Naive thymus-derived CD4-positive, alpha-beta T cell (primary cell): ENCODE measurements at regions of chr10 and their contacts with region 1.

Region 1: GRCh38 chr10:110304780-110305421 is at the start of gene SMNDC1:
- DNase-seq: peak; percentile 93 to 97 (median 96)
- ATAC-seq: peak; percentile 94
- H3K4me3 ChIP-seq: peak within 1 kb of the TSS; percentile 91
- H3K4me3 Mint-ChIP-seq: peak within 1 kb of the TSS; percentile 94 to 99 (median 98)
- H3K27ac ChIP-seq: peak within 1 kb of the TSS; percentile 89
- H3K27ac Mint-ChIP-seq: peak within 1 kb of the TSS; percentile 97 to 100 (median 100)
- H3K4me1 ChIP-seq: peaks cover 32 to 38% of the 10 kb centered on the region in 2 donors
- H3K4me1 Mint-ChIP-seq: peaks cover 26 to 61% (median 55%) of the 10 kb centered on the region in 7 donors
- H3K27me3 ChIP-seq: no peaks in the 10 kb centered on the region
- H3K27me3 Mint-ChIP-seq: no peaks in the 10 kb centered on the region
- total RNA-seq, gene SMNDC1: 34.4 to 43.1 (median 40.1) TPM

Region 2: GRCh38 chr10:110032801-110033700 is 271.9 kb before region 1 on chr10:
- CTCF ChIA-PET with region 1: no interaction called
- POLR2A ChIA-PET with region 1: no interaction called
- intact Hi-C with region 1: no loop called
- DNase-seq: no peak
- ATAC-seq: no peak
- H3K4me3 ChIP-seq: no peak overlapping the region
- H3K4me3 Mint-ChIP-seq: peak overlapping the region in 4 of 10 donors; percentile 21 to 60 (median 46)
- H3K27ac ChIP-seq: no peak overlapping the region
- H3K27ac Mint-ChIP-seq: peak overlapping the region in 6 of 9 donors; percentile 48 to 85 (median 61)
- H3K4me1 ChIP-seq: peaks cover 20 to 44% of the 10 kb centered on the region in 2 donors
- H3K4me1 Mint-ChIP-seq: peaks cover 43 to 87% (median 81%) of the 10 kb centered on the region in 7 donors
- H3K27me3 ChIP-seq: no peaks in the 10 kb centered on the region
- H3K27me3 Mint-ChIP-seq: no peaks in the 10 kb centered on the region

Region 3: GRCh38 chr10:110225756-110226542 is 79.0 kb before region 1 on chr10:
- CTCF ChIA-PET with region 1: no interaction called
- POLR2A ChIA-PET with region 1: interaction called, 7 read pairs
- intact Hi-C with region 1: loop called (anchors 1 kb)
- DNase-seq: peak; percentile 83 to 91 (median 88)
- ATAC-seq: peak; percentile 73
- H3K4me3 ChIP-seq: peak overlapping the region; percentile 75
- H3K4me3 Mint-ChIP-seq: peak overlapping the region; percentile 87 to 99 (median 94)
- H3K27ac ChIP-seq: peak overlapping the region; percentile 92
- H3K27ac Mint-ChIP-seq: peak overlapping the region; percentile 78 to 97 (median 96)
- H3K4me1 ChIP-seq: peaks cover 16 to 27% of the 10 kb centered on the region in 2 donors
- H3K4me1 Mint-ChIP-seq: peaks cover 27 to 68% (median 49%) of the 10 kb centered on the region in 7 donors
- H3K27me3 ChIP-seq: no peaks in the 10 kb centered on the region
- H3K27me3 Mint-ChIP-seq: no peaks in the 10 kb centered on the region

Region 4: DNA sequence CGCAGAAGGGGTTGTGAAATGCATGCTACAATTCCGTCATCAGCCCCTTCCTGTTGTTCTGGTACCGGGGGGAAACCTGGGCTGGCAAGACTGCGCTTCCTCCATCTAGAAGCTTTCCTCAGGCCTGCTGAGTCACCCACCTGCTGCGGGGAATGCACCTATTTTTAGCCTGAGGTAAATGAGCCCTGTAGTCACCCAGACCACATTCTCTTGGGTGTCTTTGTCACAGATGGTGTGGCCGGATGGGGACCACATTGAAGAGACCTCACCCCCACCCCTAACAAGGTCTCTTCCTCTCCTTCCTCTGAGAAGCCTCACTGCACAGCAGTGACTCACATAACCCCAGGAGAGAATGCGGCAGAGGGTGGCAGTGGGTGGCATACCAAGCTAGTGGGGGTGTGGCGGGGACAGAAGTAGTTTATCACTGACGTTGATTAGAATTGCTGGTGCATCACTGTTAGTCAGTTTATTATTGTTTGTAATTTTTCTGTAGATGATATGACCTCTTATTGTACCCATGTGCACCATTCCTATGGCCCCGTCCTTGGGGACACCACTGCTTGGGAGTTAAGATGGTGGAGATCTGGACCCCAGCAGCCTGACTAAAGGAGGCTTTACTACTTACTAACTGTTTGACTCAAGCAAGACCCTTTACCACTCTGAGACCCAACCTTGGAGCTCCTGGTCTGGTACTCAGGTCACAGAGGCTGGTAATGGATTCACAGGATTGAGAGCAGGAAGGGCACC is 109.8 kb after region 1 on chr10:
- CTCF ChIA-PET with region 1: no interaction called
- POLR2A ChIA-PET with region 1: no interaction called
- intact Hi-C with region 1: loop called in 1 of 2 experiments (anchors 1 kb)
- DNase-seq: peak; percentile 42 to 84 (median 69)
- ATAC-seq: peak; percentile 96
- H3K4me3 ChIP-seq: no peak overlapping the region
- H3K4me3 Mint-ChIP-seq: peak overlapping the region in 9 of 10 donors; percentile 13 to 71 (median 40)
- H3K27ac ChIP-seq: no peak overlapping the region
- H3K27ac Mint-ChIP-seq: peak overlapping the region; percentile 20 to 88 (median 74)
- H3K4me1 ChIP-seq: peaks cover 14 to 35% of the 10 kb centered on the region in 2 donors
- H3K4me1 Mint-ChIP-seq: peaks cover 19 to 64% (median 26%) of the 10 kb centered on the region in 7 donors
- H3K27me3 ChIP-seq: no peaks in the 10 kb centered on the region
- H3K27me3 Mint-ChIP-seq: peaks cover 0 to 5% (median 0%) of the 10 kb centered on the region in 5 donors

Region 5: GRCh38 chr10:110535958-110536891 is 231.3 kb after region 1 on chr10:
- CTCF ChIA-PET with region 1: interaction called, 3 read pairs
- POLR2A ChIA-PET with region 1: interaction called, 3 read pairs
- intact Hi-C with region 1: loop called (anchors 1 to 2 kb)
- DNase-seq: peak in 6 of 9 donors; percentile 10 to 70 (median 21)
- ATAC-seq: peak; percentile 94
- H3K4me3 ChIP-seq: no peak overlapping the region
- H3K4me3 Mint-ChIP-seq: peak overlapping the region in 2 of 10 donors; percentile 71 to 73
- H3K27ac ChIP-seq: no peak overlapping the region
- H3K27ac Mint-ChIP-seq: peak overlapping the region in 2 of 9 donors; percentile 48 to 74
- H3K4me1 ChIP-seq: peaks cover 7 to 9% of the 10 kb centered on the region in 2 donors
- H3K4me1 Mint-ChIP-seq: peaks cover 15 to 50% (median 17%) of the 10 kb centered on the region in 7 donors
- H3K27me3 ChIP-seq: no peaks in the 10 kb centered on the region
- H3K27me3 Mint-ChIP-seq: peaks cover 0 to 8% (median 0%) of the 10 kb centered on the region in 5 donors

Region 6: GRCh38 chr10:110567201-110568054 is 262.5 kb after region 1 on chr10 and contains the start of gene SMC3:
- CTCF ChIA-PET with region 1: interaction called, 8 read pairs
- POLR2A ChIA-PET with region 1: interaction called, 12 read pairs
- intact Hi-C with region 1: loop called (anchors 1 kb)
- DNase-seq: peak; percentile 82 to 96 (median 94)
- ATAC-seq: peak; percentile 94
- H3K4me3 ChIP-seq: peak within 1 kb of the TSS; percentile 88
- H3K4me3 Mint-ChIP-seq: peak within 1 kb of the TSS; percentile 91 to 99 (median 96)
- H3K27ac ChIP-seq: peak within 1 kb of the TSS; percentile 88
- H3K27ac Mint-ChIP-seq: peak within 1 kb of the TSS; percentile 96 to 99 (median 97)
- H3K4me1 ChIP-seq: peaks cover 20 to 21% of the 10 kb centered on the region in 2 donors
- H3K4me1 Mint-ChIP-seq: peaks cover 21 to 45% (median 38%) of the 10 kb centered on the region in 7 donors
- H3K27me3 ChIP-seq: no peaks in the 10 kb centered on the region
- H3K27me3 Mint-ChIP-seq: peaks cover 6 to 26% (median 14%) of the 10 kb centered on the region in 5 donors
- total RNA-seq, gene SMC3: 29.8 to 69.8 (median 48.5) TPM

Region 7: GRCh38 chr10:110681023-110681681 is 376.3 kb after region 1 on chr10:
- CTCF ChIA-PET with region 1: no interaction called
- POLR2A ChIA-PET with region 1: no interaction called
- intact Hi-C with region 1: loop called in 1 of 2 experiments (anchors 2 kb)
- DNase-seq: peak in 3 of 9 donors; percentile 7 to 27 (median 11)
- ATAC-seq: peak; percentile 51
- H3K4me3 ChIP-seq: no peak overlapping the region
- H3K4me3 Mint-ChIP-seq: no peak overlapping the region
- H3K27ac ChIP-seq: no peak overlapping the region
- H3K27ac Mint-ChIP-seq: peak overlapping the region in 2 of 9 donors; percentile 13 to 38
- H3K4me1 ChIP-seq: no peaks in the 10 kb centered on the region
- H3K4me1 Mint-ChIP-seq: peaks cover 0 to 10% (median 3%) of the 10 kb centered on the region in 7 donors
- H3K27me3 ChIP-seq: no peaks in the 10 kb centered on the region
- H3K27me3 Mint-ChIP-seq: peaks cover 0 to 37% (median 12%) of the 10 kb centered on the region in 5 donors